ENCODE measurements at regions of chr16 and their contacts with region 1.

Region 1: DNA sequence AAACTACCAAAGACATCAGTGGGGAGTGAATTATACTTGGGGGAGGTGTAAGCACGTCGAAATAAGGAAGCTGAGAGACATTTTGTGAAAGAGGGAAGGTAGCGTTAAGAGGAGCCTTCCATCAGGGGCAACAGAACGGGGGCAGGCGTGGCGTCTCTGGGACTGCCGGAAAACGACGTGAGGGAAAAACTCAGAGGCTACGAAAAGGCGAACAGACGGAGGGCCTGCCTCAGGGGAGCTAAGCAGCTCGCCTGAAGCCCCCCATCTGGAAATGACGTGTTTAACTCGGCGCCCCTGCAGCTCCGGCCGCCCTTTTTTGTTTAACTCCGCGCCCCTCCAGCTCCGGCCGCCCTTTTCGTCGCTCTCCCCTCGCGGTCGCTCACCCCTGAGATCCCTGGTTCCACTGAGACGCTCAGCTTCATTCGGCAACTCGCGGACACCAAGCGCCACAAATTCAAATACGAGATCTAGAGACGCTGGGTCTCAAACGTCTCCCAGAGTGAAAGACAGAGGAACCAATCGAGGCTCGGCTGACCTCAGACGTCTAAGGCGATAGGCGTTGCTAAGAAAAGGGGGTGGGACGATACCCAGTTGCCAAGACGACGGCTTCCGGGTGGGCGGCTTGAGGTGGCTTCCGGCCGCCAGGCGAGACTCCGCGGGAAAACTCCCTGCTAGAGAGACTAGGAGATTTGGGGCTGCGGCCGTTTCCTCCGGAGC is 383.3 kb downstream of the ZFHX3 start:
- DNase-seq: peak; percentile 97
- ATAC-seq: peak; percentile 99
- H3K4me3 ChIP-seq: peak overlapping the region; percentile 87 to 99 (median 92)
- H3K4me3 Mint-ChIP-seq: peak overlapping the region; percentile 100
- H3K27ac ChIP-seq: peak overlapping the region; percentile 84 to 92
- H3K27ac Mint-ChIP-seq: peak overlapping the region; percentile 97
- H3K4me1 ChIP-seq: peaks cover 14% of the 10 kb centered on the region in 2 donors
- H3K4me1 Mint-ChIP-seq: peaks cover 15% of the 10 kb centered on the region
- H3K27me3 ChIP-seq: no peaks in the 10 kb centered on the region
- H3K27me3 Mint-ChIP-seq: no peaks in the 10 kb centered on the region
- CTCF ChIP-seq: no peak

Region 2: GRCh38 chr16:72172105-72173034 is 492.3 kb before region 1 on chr16 and contains the start of gene PMFBP1:
- CTCF ChIA-PET with region 1: no interaction called
- POLR2A ChIA-PET with region 1: no interaction called
- intact Hi-C with region 1: loop called (anchors 1 kb)
- DNase-seq: peak; percentile 93
- ATAC-seq: peak; percentile 88
- H3K4me3 ChIP-seq: no peak within 1 kb of the TSS
- H3K4me3 Mint-ChIP-seq: peak within 1 kb of the TSS; percentile 52
- H3K27ac ChIP-seq: peak within 1 kb of the TSS; percentile 54 to 80
- H3K27ac Mint-ChIP-seq: peak within 1 kb of the TSS; percentile 91
- H3K4me1 ChIP-seq: peaks cover 12 to 13% of the 10 kb centered on the region in 2 donors
- H3K4me1 Mint-ChIP-seq: peaks cover 11% of the 10 kb centered on the region
- H3K27me3 ChIP-seq: no peaks in the 10 kb centered on the region
- H3K27me3 Mint-ChIP-seq: peaks cover 2% of the 10 kb centered on the region
- CTCF ChIP-seq: no peak
- total RNA-seq, gene PMFBP1: 9.5 and 9.7 TPM in 2 replicates

Region 3: DNA sequence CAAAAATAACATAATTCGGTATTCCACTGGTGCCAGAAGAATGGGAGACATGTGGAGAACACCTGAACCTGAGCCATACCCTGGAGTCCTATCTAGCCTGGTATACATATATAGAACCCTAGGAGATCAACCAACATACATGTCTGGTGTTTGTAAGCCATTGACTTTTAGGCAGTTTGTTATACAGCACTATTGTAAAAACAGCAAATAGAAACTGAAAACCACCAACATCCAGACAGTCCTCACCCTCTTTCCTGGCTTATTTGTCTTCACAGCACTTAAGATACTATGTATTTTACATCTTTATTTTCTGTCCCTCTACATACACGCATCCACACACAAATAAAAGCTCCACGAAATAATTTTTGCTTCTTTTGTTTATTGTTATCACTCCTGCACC is 88.5 kb before region 1 on chr16:
- CTCF ChIA-PET with region 1: no interaction called
- POLR2A ChIA-PET with region 1: no interaction called
- intact Hi-C with region 1: no loop called
- DNase-seq: no peak
- ATAC-seq: no peak
- H3K4me3 ChIP-seq: no peak overlapping the region
- H3K4me3 Mint-ChIP-seq: no peak overlapping the region
- H3K27ac ChIP-seq: no peak overlapping the region
- H3K27ac Mint-ChIP-seq: no peak overlapping the region
- H3K4me1 ChIP-seq: no peaks in the 10 kb centered on the region
- H3K4me1 Mint-ChIP-seq: peaks cover 13% of the 10 kb centered on the region
- H3K27me3 ChIP-seq: no peaks in the 10 kb centered on the region
- H3K27me3 Mint-ChIP-seq: no peaks in the 10 kb centered on the region
- CTCF ChIP-seq: no peak

Region 4: DNA sequence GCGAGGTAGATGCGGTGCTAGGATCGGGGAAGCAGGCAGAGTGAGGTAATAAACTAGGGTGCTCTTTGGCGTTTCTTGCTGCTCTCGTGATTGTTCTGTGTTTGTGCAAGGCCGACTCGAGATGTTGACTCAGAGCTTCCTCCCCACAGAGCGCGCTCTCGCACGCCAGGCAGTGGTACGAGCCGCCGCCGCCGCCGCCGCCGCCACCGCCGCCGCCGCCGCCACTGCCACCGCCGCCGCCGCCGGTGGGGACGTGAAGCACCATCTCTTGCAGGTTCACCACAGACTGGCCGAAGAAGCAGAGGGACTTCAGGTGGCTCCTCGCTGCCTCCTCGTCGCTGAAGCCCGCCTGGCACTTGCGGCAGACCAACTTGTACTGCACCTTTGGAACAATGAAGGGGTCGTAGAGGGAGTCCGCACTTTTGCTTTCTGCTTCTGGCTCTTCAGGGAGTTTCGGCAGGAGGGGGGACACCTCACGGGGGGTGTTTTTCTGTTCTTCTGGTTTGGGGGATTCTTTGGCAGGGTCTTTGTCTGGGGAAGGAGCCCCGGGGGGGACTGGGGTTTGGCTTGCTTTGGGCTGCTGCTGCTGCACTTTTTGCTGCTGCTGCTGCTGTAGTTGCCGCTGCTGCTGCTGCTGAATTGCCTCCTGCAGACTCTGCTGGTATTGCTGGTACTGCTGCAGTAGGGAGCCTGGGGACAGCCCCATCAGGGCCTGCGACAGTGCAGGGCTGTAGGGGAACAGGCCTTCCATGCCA is 123.0 kb after region 1 on chr16:
- CTCF ChIA-PET with region 1: no interaction called
- POLR2A ChIA-PET with region 1: no interaction called
- intact Hi-C with region 1: loop called (anchors 1 kb)
- DNase-seq: peak; percentile 72
- ATAC-seq: peak; percentile 94
- H3K4me3 ChIP-seq: peak overlapping the region in 4 of 5 experiments; percentile 46 to 74 (median 56)
- H3K4me3 Mint-ChIP-seq: peak overlapping the region; percentile 94
- H3K27ac ChIP-seq: no peak overlapping the region
- H3K27ac Mint-ChIP-seq: peak overlapping the region; percentile 76
- H3K4me1 ChIP-seq: peaks cover 3 to 4% of the 10 kb centered on the region in 2 donors
- H3K4me1 Mint-ChIP-seq: peaks cover 14% of the 10 kb centered on the region
- H3K27me3 ChIP-seq: peaks cover 0 to 11% (median 0%) of the 10 kb centered on the region in 4 experiments
- H3K27me3 Mint-ChIP-seq: peaks cover 4% of the 10 kb centered on the region
- CTCF ChIP-seq: no peak

Region 5: GRCh38 chr16:73047518-73048291 is 383.0 kb after region 1 on chr16 and contains the start of gene ZFHX3:
- CTCF ChIA-PET with region 1: no interaction called
- POLR2A ChIA-PET with region 1: no interaction called
- intact Hi-C with region 1: loop called (anchors 5 kb)
- DNase-seq: peak; percentile 87
- ATAC-seq: peak; percentile 86
- H3K4me3 ChIP-seq: peak within 1 kb of the TSS; percentile 34 to 71 (median 62)
- H3K4me3 Mint-ChIP-seq: peak within 1 kb of the TSS; percentile 80
- H3K27ac ChIP-seq: peak within 1 kb of the TSS in 1 of 2 donors; percentile 59
- H3K27ac Mint-ChIP-seq: peak within 1 kb of the TSS; percentile 64
- H3K4me1 ChIP-seq: peaks cover 9 to 16% of the 10 kb centered on the region in 2 donors
- H3K4me1 Mint-ChIP-seq: peaks cover 21% of the 10 kb centered on the region
- H3K27me3 ChIP-seq: peaks cover 0 to 6% (median under 1%) of the 10 kb centered on the region in 4 experiments
- H3K27me3 Mint-ChIP-seq: peaks cover 8% of the 10 kb centered on the region
- CTCF ChIP-seq: peak; percentile 4
- total RNA-seq, gene ZFHX3: 6.4 and 6.6 TPM in 2 replicates

Measured in B cell (primary cell).